Thyroid gland (tissue), 4 donors: ENCODE measurements at regions of chr7 and their contacts with region 1.

Region 1: GRCh38 chr7:123367484-123368122 is 166.8 kb downstream of the IQUB start:
- DNase-seq: peak; percentile 11 to 29
- H3K4me3 ChIP-seq: no peak overlapping the region
- H3K27ac ChIP-seq: no peak overlapping the region
- H3K4me1 ChIP-seq: no peaks in the 10 kb centered on the region
- H3K27me3 ChIP-seq: no peaks in the 10 kb centered on the region
- CTCF ChIP-seq: peak in 5 of 6 experiments; percentile 35 to 83 (median 68)
- POLR2A ChIP-seq: no peak

Region 2: DNA sequence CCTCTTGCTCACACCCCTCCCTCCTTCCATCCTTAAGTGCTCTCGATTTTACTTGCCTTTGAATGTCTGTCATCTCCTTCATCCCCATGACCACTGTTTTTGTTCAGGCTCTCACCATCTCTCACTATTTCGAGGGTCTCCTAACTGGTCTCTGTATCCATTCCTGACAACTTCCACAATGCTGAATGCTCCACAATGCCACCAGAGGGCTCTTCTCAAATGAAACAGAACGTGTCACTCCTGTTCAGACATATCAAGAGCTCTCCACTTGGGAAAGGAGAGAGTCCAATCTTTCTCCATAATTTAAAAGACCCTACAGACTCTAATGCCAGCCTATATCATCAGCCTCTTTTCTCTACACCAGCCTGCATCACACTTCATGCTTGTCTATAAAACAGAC is 158.8 kb before region 1 on chr7:
- intact Hi-C with region 1: loop called (anchors 5 kb)
- DNase-seq: peak; percentile 17 to 25
- H3K4me3 ChIP-seq: no peak overlapping the region
- H3K27ac ChIP-seq: no peak overlapping the region
- H3K4me1 ChIP-seq: no peaks in the 10 kb centered on the region
- H3K27me3 ChIP-seq: no peaks in the 10 kb centered on the region
- CTCF ChIP-seq: peak in 5 of 6 experiments; percentile 27 to 78 (median 48)
- POLR2A ChIP-seq: no peak

Region 3: DNA sequence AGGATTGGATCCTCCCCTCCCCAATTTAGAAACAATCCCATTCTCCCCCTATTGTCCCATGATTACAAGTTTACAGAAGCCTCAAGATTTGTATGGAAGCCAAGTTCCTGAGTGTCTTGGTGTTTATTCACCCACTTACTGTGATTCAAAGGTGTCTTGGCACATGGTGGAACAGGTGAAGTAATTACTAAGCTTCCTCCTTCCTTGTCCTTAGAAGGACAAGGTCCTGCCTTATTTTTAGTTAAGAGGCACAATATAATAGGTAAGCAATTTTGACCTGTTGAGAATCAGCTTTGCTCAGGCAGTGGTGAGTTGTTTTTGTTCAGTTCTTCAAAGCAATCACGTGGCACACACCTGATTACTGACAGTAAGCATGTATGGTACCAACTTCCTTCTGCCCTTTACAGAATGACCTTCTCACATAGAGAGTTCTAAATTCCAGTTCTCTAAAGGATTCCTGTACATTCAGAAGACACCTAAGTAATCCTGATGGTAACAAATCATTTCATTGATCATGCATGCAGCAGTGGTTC is 107.1 kb before region 1 on chr7:
- intact Hi-C with region 1: no loop called
- DNase-seq: peak; percentile 5 to 38
- H3K4me3 ChIP-seq: no peak overlapping the region
- H3K27ac ChIP-seq: peak overlapping the region in 1 of 3 donors; percentile 40
- H3K4me1 ChIP-seq: peaks cover 0 to 2% of the 10 kb centered on the region in 2 donors
- H3K27me3 ChIP-seq: no peaks in the 10 kb centered on the region
- CTCF ChIP-seq: no peak
- POLR2A ChIP-seq: no peak

Region 4: GRCh38 chr7:123275036-123275753 is 92.4 kb before region 1 on chr7:
- intact Hi-C with region 1: no loop called
- DNase-seq: no peak
- H3K4me3 ChIP-seq: no peak overlapping the region
- H3K27ac ChIP-seq: no peak overlapping the region
- H3K4me1 ChIP-seq: no peaks in the 10 kb centered on the region
- H3K27me3 ChIP-seq: no peaks in the 10 kb centered on the region
- CTCF ChIP-seq: no peak
- POLR2A ChIP-seq: no peak